ENCODE measurements at regions of chr4 and their contacts with region 1.

Region 1: DNA sequence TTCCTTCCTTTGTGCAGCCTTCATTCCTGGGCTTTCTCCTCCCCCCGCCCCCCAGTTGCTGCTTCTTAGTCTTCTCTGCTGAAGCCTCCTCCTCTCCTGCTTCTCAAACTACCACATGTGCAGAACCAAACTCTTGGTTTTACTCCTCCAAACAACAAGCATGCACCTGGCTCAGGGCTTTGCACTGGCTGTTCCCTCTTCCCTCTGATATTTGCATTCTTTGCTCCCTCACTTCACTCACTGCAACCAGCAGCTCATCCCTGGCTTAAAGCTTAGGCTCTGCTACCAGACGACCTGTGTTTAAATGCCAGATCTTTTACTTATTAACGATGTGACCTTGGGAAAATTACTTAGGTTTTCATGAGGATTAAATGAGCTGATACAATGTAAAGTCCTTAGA is 51.4 kb downstream of the MED28 start:
- DNase-seq: no peak
- H3K4me3 Mint-ChIP-seq: peak overlapping the region; percentile 48
- H3K27ac Mint-ChIP-seq: peak overlapping the region; percentile 23
- H3K4me1 Mint-ChIP-seq: peaks cover 18% of the 10 kb centered on the region
- H3K27me3 Mint-ChIP-seq: no peaks in the 10 kb centered on the region
- CTCF ChIP-seq: no peak

Region 2: GRCh38 chr4:17654701-17655100 is 11.2 kb before region 1 on chr4:
- CTCF ChIA-PET with region 1: interaction called, 11 read pairs
- intact Hi-C with region 1: no loop called
- DNase-seq: no peak
- H3K4me3 Mint-ChIP-seq: no peak overlapping the region
- H3K27ac Mint-ChIP-seq: no peak overlapping the region
- H3K4me1 Mint-ChIP-seq: no peaks in the 10 kb centered on the region
- H3K27me3 Mint-ChIP-seq: no peaks in the 10 kb centered on the region
- CTCF ChIP-seq: no peak

Region 3: DNA sequence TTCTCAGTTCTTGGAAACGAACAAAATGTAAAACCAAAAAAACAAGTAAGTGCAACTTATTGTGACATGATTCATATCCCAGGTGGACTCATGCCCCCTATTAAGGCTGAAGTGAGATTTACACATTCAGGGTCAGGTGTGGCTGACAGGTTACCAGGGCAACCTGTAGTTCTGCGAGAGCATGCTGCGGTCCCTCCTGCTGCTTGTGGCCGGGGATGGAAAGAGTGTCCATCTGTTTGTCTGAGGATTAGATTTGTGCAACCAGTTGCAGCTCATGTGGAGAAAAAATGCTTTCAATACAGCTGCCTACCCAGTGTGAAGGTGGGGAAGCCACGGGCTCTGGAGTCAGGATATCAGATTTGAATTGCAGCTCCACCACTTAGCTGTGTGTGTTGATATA is 36.8 kb after region 1 on chr4:
- CTCF ChIA-PET with region 1: no interaction called
- intact Hi-C with region 1: no loop called
- DNase-seq: no peak
- H3K4me3 Mint-ChIP-seq: no peak overlapping the region
- H3K27ac Mint-ChIP-seq: no peak overlapping the region
- H3K4me1 Mint-ChIP-seq: peaks cover 9% of the 10 kb centered on the region
- H3K27me3 Mint-ChIP-seq: no peaks in the 10 kb centered on the region
- CTCF ChIP-seq: no peak

Measured in Calu3 (cell line).